ENCODE measurements at regions of chr3 and their contacts with region 1.

Region 1: DNA sequence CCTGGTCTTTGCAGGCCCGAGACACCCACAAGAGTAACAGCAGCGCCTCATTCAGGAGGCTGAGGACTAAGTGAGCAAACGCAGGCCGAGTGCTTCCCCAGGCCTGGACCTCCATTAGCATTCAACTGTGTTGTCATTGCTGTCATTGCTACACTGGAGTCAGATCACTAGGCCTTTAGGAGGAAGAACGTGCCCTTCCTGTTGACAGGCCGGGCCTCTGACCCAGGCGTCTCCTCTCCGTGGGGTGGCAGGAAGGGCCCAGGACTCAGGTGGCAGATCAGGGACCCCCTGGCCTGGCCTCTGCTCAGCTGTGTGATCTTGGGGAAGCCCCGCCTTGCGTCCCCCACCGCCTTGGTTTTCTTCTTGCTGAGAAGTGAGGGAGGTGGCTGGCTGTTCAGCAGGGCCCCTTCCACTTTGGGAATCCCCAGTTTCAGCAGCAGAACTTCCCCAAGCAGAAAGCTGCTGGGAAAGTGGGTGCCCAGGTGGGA is 19.1 kb downstream of the ZDHHC19 start:
- DNase-seq: peak; percentile 68
- ATAC-seq: peak; percentile 73
- H3K4me3 Mint-ChIP-seq: peak overlapping the region; percentile 70
- H3K27ac Mint-ChIP-seq: peak overlapping the region; percentile 98
- H3K4me1 Mint-ChIP-seq: peaks cover 62% of the 10 kb centered on the region
- H3K27me3 Mint-ChIP-seq: no peaks in the 10 kb centered on the region
- CTCF ChIP-seq: no peak

Region 2: DNA sequence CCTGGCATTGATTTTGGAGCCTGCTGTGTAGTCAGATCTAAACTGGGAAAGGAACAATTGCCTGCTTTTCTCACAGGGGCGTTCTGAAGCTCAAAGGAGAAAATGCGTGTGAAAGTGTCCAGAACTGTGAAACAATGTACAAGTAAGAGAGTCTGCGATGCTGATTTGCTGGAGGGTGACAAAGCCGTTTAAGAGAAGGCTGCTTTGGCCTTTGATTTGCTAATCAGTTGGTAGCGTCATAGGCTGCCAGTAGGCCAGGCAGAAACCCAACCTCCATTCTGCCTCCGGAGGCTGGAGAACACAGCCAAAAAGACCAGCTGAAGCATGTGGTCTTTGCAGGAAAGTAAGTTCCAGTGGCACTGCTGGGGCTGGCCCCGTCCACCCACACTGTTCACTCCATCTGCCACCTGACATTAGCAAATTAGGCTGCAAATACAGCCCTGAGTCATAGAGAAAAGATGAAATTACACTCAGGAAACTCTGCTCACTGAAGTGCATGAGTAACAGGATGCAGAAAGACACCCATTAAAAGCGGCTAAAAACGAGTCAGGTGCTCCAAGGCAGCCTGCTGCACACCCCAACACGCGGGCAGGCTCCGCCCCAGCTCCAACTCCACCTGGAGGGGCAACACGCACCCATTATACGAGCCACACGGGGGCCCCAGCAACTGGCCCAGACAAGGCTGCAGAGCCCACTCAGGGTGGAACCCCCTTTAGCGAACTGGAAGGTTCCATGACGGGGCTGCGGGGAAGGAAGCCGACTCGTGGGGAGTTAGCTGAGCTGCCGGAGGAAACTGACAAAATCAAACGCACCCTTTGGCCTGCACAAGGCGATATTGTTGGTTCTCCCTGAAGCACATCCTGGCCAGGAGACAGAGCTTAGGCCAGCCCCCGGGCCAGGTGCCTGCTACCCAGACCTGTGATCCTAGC is 12.4 kb before region 1 on chr3:
- CTCF ChIA-PET with region 1: interaction called, 7 read pairs
- POLR2A ChIA-PET with region 1: interaction called, 116 read pairs
- intact Hi-C with region 1: loop called (anchors 1 kb)
- DNase-seq: peak; percentile 73
- ATAC-seq: peak; percentile 80
- H3K4me3 Mint-ChIP-seq: peak overlapping the region; percentile 66
- H3K27ac Mint-ChIP-seq: peak overlapping the region; percentile 97
- H3K4me1 Mint-ChIP-seq: peaks cover 48% of the 10 kb centered on the region
- H3K27me3 Mint-ChIP-seq: no peaks in the 10 kb centered on the region
- CTCF ChIP-seq: no peak

Region 3: DNA sequence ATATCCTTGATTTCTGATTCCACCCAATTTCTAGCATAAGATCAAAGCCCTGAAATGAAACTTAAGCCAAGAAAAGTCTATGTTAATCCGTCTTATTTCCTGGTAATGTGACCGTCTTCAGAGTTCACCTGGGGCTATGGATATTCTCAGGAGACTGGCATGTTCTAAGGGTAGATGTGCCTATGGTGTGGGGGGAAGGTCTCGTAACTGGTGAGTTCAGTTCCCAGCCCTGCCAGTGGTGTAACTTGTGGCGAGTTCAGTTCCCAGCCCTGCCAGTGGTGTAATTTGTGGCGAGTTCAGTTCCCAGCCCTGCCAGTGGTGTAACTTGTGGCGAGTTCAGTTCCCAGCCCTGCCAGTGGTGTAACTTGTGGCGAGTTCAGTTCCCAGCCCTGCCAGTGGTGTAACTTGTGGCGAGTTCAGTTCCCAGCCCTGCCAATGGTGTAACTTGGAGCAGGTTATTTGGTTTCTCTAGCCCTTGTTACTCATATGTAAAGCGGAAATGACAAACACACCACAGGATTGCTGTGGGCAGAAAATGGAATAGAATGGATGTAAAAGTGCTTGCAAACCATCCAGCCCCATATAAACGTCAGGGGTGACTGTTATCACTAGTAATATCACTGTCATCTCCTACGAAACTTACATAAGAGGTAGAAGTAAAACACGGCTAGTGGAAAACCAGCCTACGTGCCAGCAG is 54.7 kb after region 1 on chr3:
- CTCF ChIA-PET with region 1: no interaction called
- POLR2A ChIA-PET with region 1: no interaction called
- intact Hi-C with region 1: no loop called
- DNase-seq: no peak
- ATAC-seq: no peak
- H3K4me3 Mint-ChIP-seq: no peak overlapping the region
- H3K27ac Mint-ChIP-seq: no peak overlapping the region
- H3K4me1 Mint-ChIP-seq: peaks cover 2% of the 10 kb centered on the region
- H3K27me3 Mint-ChIP-seq: no peaks in the 10 kb centered on the region
- CTCF ChIP-seq: no peak